Dorsolateral prefrontal cortex (tissue), 120 donors: ENCODE measurements at regions of chr20 and their contacts with region 1.

Region 1: GRCh38 chr20:59645761-59646171 is 41.4 kb downstream of the PHACTR3 start:
- DNase-seq: peak in 3 of 10 donors; percentile 52 to 71 (median 61)
- H3K4me3 ChIP-seq: peak overlapping the region in 27 of 59 donors; percentile 1 to 46 (median 25)
- H3K27ac ChIP-seq: peak overlapping the region; percentile 70 to 96 (median 92)
- H3K27me3 ChIP-seq: no peaks in the 10 kb centered on the region
- CTCF ChIP-seq: peak; percentile 6 to 82 (median 62)

Region 2: DNA sequence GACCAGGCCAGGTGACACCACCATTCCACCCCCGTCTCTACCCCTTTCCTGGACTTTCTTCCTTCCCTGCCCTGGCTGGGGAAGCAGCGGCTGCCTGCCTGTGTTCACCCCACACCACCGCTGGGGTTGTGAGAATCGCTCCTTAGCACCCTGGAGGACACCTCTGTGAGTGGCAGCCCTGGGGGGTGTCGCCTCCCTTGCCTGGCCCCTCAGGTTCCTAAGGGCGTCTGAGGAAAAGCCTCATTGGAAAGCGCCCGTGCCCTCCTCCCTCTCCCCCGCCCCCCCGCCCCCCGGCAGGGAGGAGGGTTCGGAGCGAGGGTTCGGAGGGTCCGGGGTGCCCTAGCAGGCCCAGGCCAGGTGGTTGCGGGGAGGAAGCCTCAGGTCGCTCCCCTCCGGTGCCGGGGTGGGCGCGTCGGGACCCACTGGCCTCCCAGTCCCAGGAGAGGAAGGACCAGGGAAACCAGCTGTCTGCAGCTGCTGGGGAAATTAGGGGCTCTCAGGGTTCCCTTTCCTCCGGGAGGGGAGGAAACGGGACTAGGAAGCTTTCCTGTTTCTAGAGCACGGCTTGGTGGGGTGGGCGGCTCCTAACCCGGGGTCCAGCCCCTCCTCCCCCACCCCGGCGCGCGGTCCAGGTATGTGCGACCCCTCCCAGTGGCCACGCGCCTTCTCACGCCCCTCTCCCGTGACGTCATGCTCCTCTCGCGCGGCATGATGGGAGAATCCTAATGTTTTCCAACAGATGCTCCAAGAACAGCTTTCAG is 41.8 kb before region 1 on chr20 and contains the start of gene PHACTR3:
- intact Hi-C with region 1: loop called (anchors 2 to 5 kb)
- DNase-seq: peak; percentile 69 to 88 (median 82)
- H3K4me3 ChIP-seq: peak within 1 kb of the TSS; percentile 55 to 90 (median 78)
- H3K27ac ChIP-seq: peak within 1 kb of the TSS; percentile 79 to 99 (median 96)
- H3K27me3 ChIP-seq: peaks cover 0 to 5% (median 0%) of the 10 kb centered on the region in 45 donors
- CTCF ChIP-seq: peak in 4 of 56 donors; percentile 5 to 13 (median 10)
- total RNA-seq, gene PHACTR3: 79.3 to 168 (median 106) TPM

Region 3: DNA sequence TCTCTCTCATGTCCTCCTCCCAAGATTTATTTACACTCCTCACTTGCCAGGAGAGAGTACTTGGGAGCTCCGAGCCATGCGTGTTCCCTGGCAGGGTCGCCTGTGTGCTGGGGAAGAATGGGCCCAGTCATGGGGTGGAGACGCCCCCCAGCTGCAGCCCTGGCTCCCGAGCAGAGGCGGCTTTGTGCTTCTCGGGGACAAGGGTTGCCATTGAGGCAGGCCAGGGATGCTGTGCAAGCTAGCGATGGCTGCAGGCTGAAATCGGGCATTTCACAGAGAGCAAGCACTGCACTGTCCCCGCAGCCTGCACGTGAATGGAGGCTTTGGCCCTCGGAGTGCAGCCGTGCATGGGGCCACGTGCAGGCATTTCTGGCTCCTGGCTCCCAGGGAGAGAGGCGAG is 17.6 kb before region 1 on chr20:
- intact Hi-C with region 1: loop called (anchors 1 to 2 kb)
- DNase-seq: peak; percentile 43 to 97 (median 94)
- H3K4me3 ChIP-seq: peak overlapping the region in 53 of 59 donors; percentile 11 to 69 (median 43)
- H3K27ac ChIP-seq: peak overlapping the region; percentile 90 to 100 (median 98)
- H3K27me3 ChIP-seq: no peaks in the 10 kb centered on the region
- CTCF ChIP-seq: peak in 50 of 56 donors; percentile 16 to 71 (median 42)

Region 4: GRCh38 chr20:59751056-59751688 is 105.4 kb after region 1 on chr20:
- intact Hi-C with region 1: loop called in 1 of 2 experiments (anchors 2 kb)
- DNase-seq: peak; percentile 79 to 93 (median 86)
- H3K4me3 ChIP-seq: peak overlapping the region in 20 of 59 donors; percentile 4 to 48 (median 28)
- H3K27ac ChIP-seq: peak overlapping the region in 49 of 59 donors; percentile 6 to 82 (median 61)
- H3K27me3 ChIP-seq: no peaks in the 10 kb centered on the region
- CTCF ChIP-seq: peak; percentile 66 to 97 (median 92)